ENCODE measurements at regions of chr4 and their contacts with region 1.

Region 1: DNA sequence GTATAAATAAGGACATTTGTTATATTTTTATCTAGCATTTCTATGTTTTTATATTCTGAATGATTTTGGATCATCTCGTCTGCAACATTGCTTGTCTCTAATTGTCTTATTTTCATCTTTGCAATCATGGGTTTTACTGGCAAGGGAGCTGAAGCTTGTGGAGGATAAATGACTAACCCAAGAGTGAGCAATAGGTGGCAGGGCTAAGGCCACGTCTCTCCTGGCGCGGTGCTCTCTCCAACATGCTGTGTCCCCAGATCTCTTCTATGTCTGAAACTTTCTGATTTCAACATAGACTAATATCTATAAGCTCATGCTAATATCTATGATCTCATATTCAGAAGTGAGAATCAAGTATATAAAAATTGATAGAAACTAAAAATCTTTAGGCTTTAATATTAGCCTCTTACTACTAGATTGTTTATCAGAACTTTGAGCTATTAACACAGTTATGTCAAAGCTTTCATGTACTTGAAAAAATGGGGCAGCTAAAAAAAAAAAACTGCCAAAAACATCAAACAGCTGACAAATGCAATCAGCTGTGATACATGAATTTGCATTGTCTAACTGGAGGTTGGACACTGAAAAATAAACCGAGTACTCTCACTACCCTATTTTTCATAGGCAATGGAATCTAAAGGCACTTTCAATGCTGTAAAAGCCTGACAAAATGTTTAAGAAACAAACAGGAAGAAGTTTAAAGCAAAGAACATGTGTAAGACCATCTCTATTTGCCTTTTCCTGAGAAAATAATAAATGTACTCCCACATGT is 169.2 kb downstream of the TMA16 start:
- DNase-seq: no peak
- ATAC-seq: peak; percentile 70
- H3K4me3 Mint-ChIP-seq: peak overlapping the region; percentile 62
- H3K27ac Mint-ChIP-seq: peak overlapping the region; percentile 97
- H3K4me1 Mint-ChIP-seq: peaks cover 80% of the 10 kb centered on the region
- H3K27me3 Mint-ChIP-seq: no peaks in the 10 kb centered on the region
- CTCF ChIP-seq: no peak

Region 2: GRCh38 chr4:163494360-163495162 is 169.1 kb before region 1 on chr4 and contains the start of gene TMA16:
- CTCF ChIA-PET with region 1: no interaction called
- POLR2A ChIA-PET with region 1: interaction called, 31 read pairs
- intact Hi-C with region 1: loop called (anchors 1 kb)
- DNase-seq: peak; percentile 75
- ATAC-seq: peak; percentile 66
- H3K4me3 Mint-ChIP-seq: peak within 1 kb of the TSS; percentile 99
- H3K27ac Mint-ChIP-seq: peak within 1 kb of the TSS; percentile 99
- H3K4me1 Mint-ChIP-seq: peaks cover 43% of the 10 kb centered on the region
- H3K27me3 Mint-ChIP-seq: no peaks in the 10 kb centered on the region
- CTCF ChIP-seq: no peak
- total RNA-seq, gene TMA16: 52.5 and 54.1 TPM in 2 replicates

Region 3: DNA sequence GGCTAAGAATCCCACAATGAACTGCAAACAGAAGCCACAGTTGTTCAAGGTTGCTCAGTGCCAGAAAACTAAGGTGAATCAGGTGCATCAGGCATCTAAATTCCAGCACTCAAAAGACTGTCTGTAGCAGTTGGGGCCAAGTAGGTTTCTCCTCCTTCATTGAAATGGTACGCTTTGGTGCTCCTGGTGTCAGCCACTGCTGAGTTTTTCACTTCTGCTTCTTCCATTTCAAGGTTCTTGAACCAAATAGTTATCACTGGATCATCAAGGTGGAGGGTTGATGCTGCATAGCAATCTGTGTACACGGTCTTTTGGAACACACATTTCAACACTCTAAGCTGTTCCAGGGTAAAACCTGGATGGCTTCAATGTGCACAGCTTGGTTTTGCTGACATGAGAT is 94.8 kb before region 1 on chr4:
- CTCF ChIA-PET with region 1: no interaction called
- POLR2A ChIA-PET with region 1: interaction called, 10 read pairs
- intact Hi-C with region 1: no loop called
- DNase-seq: no peak
- ATAC-seq: peak; percentile 91
- H3K4me3 Mint-ChIP-seq: peak overlapping the region; percentile 54
- H3K27ac Mint-ChIP-seq: peak overlapping the region; percentile 80
- H3K4me1 Mint-ChIP-seq: peaks cover 82% of the 10 kb centered on the region
- H3K27me3 Mint-ChIP-seq: no peaks in the 10 kb centered on the region
- CTCF ChIP-seq: no peak

Region 4: GRCh38 chr4:163603257-163603656 is 60.4 kb before region 1 on chr4:
- CTCF ChIA-PET with region 1: interaction called, 4 read pairs
- POLR2A ChIA-PET with region 1: interaction called, 203 read pairs
- intact Hi-C with region 1: no loop called
- DNase-seq: no peak
- ATAC-seq: peak; percentile 18
- H3K4me3 Mint-ChIP-seq: peak overlapping the region; percentile 84
- H3K27ac Mint-ChIP-seq: peak overlapping the region; percentile 98
- H3K4me1 Mint-ChIP-seq: peaks cover 90% of the 10 kb centered on the region
- H3K27me3 Mint-ChIP-seq: no peaks in the 10 kb centered on the region
- CTCF ChIP-seq: no peak

Region 5: DNA sequence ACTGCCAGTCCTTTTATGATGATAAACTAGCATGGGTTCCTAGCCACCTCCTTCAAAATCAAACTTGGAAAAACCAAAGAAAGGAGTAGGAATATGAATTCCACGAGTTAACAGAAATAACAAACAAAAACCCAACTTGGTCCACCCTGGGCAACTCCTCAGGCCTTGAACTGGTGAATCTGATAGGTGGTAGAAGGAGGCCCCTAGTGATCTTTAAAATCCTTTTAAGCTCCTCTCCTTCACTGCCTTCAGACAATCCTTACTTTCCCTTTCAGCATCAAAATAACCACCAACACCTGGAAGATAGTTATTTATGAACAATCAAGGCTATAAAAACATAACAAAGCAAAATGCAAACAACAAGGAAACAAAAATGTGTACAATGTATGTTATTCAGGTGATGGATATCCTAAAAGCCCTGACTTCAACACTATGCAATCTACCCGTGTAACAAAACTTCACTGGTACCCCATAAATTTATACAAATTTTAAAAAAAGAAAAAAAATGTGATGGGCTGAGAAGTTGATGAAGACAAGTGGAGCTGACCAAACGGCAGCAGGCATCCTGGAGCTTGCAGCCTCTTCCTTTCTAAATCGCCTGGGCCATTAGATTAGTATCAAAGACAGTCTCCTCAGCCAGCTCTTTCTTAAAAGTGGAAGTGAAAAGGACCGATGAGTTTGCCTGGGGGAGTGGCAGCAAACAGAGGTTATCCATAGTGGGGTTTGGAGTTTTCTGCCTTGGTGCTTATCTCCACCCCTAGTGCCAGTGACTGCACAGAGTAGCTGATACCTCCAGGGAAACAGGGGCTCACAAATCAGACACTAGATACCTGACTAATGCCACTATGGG is 10.4 kb after region 1 on chr4:
- CTCF ChIA-PET with region 1: interaction called, 17 read pairs
- POLR2A ChIA-PET with region 1: interaction called, 21 read pairs
- intact Hi-C with region 1: loop called (anchors 1 kb)
- DNase-seq: no peak
- ATAC-seq: peak; percentile 89
- H3K4me3 Mint-ChIP-seq: peak overlapping the region; percentile 44
- H3K27ac Mint-ChIP-seq: peak overlapping the region; percentile 88
- H3K4me1 Mint-ChIP-seq: peaks cover 50% of the 10 kb centered on the region
- H3K27me3 Mint-ChIP-seq: no peaks in the 10 kb centered on the region
- CTCF ChIP-seq: no peak

Region 6: DNA sequence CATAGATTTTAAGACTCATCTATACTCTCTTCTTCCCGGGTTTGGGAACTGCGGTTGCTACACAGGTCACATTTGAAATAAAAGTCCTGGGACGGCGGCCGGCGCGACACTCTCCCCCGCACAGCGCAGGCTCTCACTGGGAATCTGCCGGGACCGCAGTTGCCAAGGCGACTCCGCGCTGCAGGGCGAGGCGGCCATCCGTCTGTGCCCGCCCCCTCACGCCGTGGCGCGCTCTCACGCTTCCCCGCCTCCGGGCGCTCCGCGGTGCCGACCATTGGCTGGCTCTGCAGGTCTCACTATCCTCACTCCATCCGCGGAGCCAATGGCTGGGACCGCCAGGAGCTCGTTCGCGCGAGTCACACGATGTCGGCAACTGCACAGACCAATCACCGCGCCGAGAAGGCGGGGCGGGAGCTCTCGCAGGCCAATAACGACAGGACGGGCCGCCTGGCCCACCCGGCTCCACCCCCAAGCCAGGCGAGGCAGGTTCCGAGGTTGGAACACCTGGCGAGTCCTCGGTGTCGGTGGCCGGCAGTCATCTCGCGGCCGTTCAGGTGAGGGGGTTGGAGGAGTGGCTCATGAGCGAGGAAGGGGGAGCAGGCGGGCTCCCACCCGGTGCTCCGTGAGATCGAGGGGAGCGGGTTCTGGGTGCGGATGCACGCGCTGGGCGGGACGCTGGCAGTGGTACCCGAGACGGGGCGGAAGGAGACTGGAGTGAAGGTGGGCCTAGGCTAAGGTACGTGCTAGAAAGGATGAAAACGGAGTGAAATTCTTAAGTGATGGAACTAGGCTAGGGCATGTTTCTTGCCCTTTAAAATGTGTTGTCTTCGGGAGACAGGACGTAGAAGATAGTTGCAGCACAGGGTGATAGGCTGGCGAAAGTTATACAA is 1663.8 kb after region 1 on chr4 and contains the start of gene MSMO1:
- CTCF ChIA-PET with region 1: no interaction called
- POLR2A ChIA-PET with region 1: no interaction called
- intact Hi-C with region 1: loop called (anchors 1 kb)
- DNase-seq: peak; percentile 92
- ATAC-seq: peak; percentile 96
- H3K4me3 Mint-ChIP-seq: no peak within 1 kb of the TSS
- H3K27ac Mint-ChIP-seq: no peak within 1 kb of the TSS
- H3K4me1 Mint-ChIP-seq: peaks cover 40% of the 10 kb centered on the region
- H3K27me3 Mint-ChIP-seq: no peaks in the 10 kb centered on the region
- CTCF ChIP-seq: no peak
- total RNA-seq, gene MSMO1: 74.6 and 87.9 TPM in 2 replicates